Left lung (tissue), 14 donors: ENCODE measurements at regions of chr9 and their contacts with region 1.

Region 1: DNA sequence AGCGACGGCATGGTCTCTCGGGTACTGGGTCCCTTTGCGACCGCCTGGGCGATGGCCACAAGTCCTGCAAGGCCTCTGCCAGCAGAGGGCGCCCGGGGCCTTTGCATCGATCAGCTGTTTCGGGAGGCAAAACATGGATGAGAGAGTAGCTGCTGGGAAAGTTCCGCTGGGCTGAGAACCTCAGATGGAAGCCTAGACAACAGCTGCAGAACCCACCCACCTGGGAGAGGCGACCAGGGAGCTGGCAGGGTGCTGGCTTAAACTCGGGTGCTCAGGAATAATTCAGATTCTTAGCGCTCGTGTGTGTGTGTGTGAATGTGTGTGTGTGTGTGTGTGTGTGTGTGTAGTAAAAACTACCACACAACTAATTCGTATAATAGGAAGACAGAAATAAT is 50.0 kb downstream of the TRIM32 start:
- DNase-seq: peak; percentile 68 to 92 (median 79)
- ATAC-seq: peak; percentile 94
- H3K4me3 ChIP-seq: no peak overlapping the region
- H3K27ac ChIP-seq: no peak overlapping the region
- H3K4me1 ChIP-seq: no peaks in the 10 kb centered on the region
- H3K27me3 ChIP-seq: no peaks in the 10 kb centered on the region
- CTCF ChIP-seq: peak; percentile 80 to 82

Region 2: GRCh38 chr9:116390306-116391228 is 346.6 kb before region 1 on chr9:
- intact Hi-C with region 1: no loop called
- DNase-seq: no peak
- ATAC-seq: no peak
- H3K4me3 ChIP-seq: no peak overlapping the region
- H3K27ac ChIP-seq: no peak overlapping the region
- H3K4me1 ChIP-seq: no peaks in the 10 kb centered on the region
- H3K27me3 ChIP-seq: no peaks in the 10 kb centered on the region
- CTCF ChIP-seq: no peak

Region 3: GRCh38 chr9:116855883-116856662 is 118.9 kb after region 1 on chr9:
- intact Hi-C with region 1: loop called (anchors 5 kb)
- DNase-seq: peak in 2 of 4 donors; percentile 11 to 61
- ATAC-seq: peak; percentile 92
- H3K4me3 ChIP-seq: no peak overlapping the region
- H3K27ac ChIP-seq: no peak overlapping the region
- H3K4me1 ChIP-seq: no peaks in the 10 kb centered on the region
- H3K27me3 ChIP-seq: no peaks in the 10 kb centered on the region
- CTCF ChIP-seq: no peak